Natural killer cell (primary cell): ENCODE measurements at regions of chr17 and their contacts with region 1.

Region 1: DNA sequence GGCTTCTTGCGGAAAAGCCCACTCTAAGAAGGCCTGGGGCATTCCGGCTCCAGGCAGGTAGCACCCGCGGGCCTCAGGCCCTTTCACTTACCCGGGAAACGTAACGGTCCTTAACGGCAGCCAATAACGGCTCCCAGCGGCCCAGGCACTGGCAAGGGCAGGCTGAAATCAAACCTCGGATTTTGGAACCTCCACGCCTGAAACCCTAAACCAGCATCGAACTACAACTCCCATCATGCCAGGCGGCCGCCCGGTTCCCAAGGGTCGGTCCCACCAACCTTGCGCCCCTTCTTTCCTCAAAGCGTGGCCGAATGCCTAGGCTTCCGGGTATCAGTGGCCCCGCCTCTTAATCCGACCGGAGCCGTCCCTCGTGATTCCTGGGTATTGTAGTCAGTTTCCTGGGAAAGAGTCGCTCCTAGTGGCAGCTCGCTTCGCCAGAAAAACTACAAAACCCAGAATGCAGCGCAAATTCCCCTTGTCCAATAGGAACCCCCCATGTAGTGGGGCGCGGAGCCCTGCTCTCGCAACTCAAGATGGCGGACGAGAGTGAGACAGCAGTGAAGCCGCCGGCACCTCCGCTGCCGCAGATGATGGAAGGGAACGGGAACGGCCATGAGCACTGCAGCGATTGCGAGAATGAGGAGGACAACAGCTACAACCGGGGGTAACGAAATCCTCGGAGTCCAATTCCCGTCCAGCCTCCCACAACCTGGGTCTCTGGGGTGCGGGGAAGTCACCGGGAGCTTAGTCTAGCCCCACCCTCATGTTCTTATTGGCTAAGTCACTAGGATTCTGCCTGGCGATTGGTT is at the start of gene NMT1:
- DNase-seq: peak; percentile 90 to 98
- ATAC-seq: peak; percentile 89 to 97 (median 89)
- H3K4me3 ChIP-seq: peak within 1 kb of the TSS; percentile 87
- H3K4me3 Mint-ChIP-seq: peak within 1 kb of the TSS; percentile 91
- H3K27ac ChIP-seq: peak within 1 kb of the TSS; percentile 84
- H3K27ac Mint-ChIP-seq: peak within 1 kb of the TSS; percentile 90 to 100
- H3K4me1 ChIP-seq: peaks cover 20% of the 10 kb centered on the region
- H3K4me1 Mint-ChIP-seq: peaks cover 26 to 31% of the 10 kb centered on the region in 2 donors
- H3K27me3 ChIP-seq: no peaks in the 10 kb centered on the region
- H3K27me3 Mint-ChIP-seq: no peaks in the 10 kb centered on the region
- CTCF ChIP-seq: no peak
- total RNA-seq, gene NMT1: 56.6 to 94.7 (median 77.6) TPM

Region 2: GRCh38 chr17:44887971-44888954 is 172.7 kb before region 1 on chr17:
- intact Hi-C with region 1: no loop called
- DNase-seq: peak in 1 of 2 donors; percentile 47
- ATAC-seq: peak in 2 of 3 donors; percentile 73 to 84
- H3K4me3 ChIP-seq: no peak overlapping the region
- H3K4me3 Mint-ChIP-seq: no peak overlapping the region
- H3K27ac ChIP-seq: peak overlapping the region; percentile 21
- H3K27ac Mint-ChIP-seq: no peak overlapping the region
- H3K4me1 ChIP-seq: peaks cover 23% of the 10 kb centered on the region
- H3K4me1 Mint-ChIP-seq: peaks cover 0 to 5% of the 10 kb centered on the region in 2 donors
- H3K27me3 ChIP-seq: no peaks in the 10 kb centered on the region
- H3K27me3 Mint-ChIP-seq: no peaks in the 10 kb centered on the region
- CTCF ChIP-seq: no peak

Region 3: DNA sequence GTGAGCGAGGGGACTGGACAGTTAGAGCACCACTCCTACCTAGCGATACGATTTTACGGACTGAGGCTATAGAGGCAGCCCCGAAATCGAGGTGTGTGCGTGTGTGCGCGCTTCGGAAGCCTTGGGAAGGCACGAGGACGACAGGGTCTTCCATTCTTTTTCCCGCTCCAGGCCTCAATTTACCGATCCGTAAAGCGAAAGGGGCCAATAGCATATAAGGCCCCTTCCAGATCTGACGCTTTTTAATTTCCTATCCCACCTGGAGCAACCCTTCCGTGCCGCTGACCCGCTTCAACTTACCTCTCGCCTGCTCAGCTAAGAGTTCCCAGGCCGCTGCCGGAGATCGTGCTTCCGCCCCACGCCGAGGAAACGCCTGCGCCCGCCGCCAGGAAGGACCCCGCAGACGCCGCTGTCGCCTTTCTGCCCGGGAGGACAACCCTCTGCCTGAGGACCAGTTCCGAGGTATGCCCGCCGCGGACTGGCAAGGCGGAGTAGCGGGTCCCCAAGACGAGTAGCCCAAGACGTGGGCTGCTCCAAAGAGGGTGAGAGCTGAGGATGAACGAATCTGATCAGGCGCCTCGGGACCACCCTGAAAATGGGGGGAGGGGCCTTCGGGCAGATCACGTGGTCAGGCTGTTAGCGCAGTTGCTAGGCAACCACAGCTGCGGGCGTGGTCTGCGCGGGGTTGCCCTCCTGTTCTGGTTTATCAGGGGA is 161.8 kb before region 1 on chr17 and contains the start of gene EFTUD2:
- intact Hi-C with region 1: loop called (anchors 1 kb)
- DNase-seq: peak; percentile 94 to 97
- ATAC-seq: peak; percentile 93 to 95 (median 94)
- H3K4me3 ChIP-seq: peak within 1 kb of the TSS; percentile 97
- H3K4me3 Mint-ChIP-seq: peak within 1 kb of the TSS; percentile 92
- H3K27ac ChIP-seq: peak within 1 kb of the TSS; percentile 99
- H3K27ac Mint-ChIP-seq: peak within 1 kb of the TSS; percentile 99
- H3K4me1 ChIP-seq: peaks cover 20% of the 10 kb centered on the region
- H3K4me1 Mint-ChIP-seq: peaks cover 16 to 32% of the 10 kb centered on the region in 2 donors
- H3K27me3 ChIP-seq: no peaks in the 10 kb centered on the region
- H3K27me3 Mint-ChIP-seq: peaks cover 3 to 11% of the 10 kb centered on the region in 2 donors
- CTCF ChIP-seq: no peak
- total RNA-seq, gene EFTUD2: 135 to 178 (median 164) TPM

Region 4: GRCh38 chr17:45161019-45161825 is 100.2 kb after region 1 on chr17:
- intact Hi-C with region 1: loop called (anchors 1 kb)
- DNase-seq: peak; percentile 97 to 99
- ATAC-seq: peak; percentile 91 to 97 (median 93)
- H3K4me3 ChIP-seq: peak overlapping the region; percentile 99
- H3K4me3 Mint-ChIP-seq: peak overlapping the region; percentile 95
- H3K27ac ChIP-seq: peak overlapping the region; percentile 100
- H3K27ac Mint-ChIP-seq: peak overlapping the region; percentile 93 to 94
- H3K4me1 ChIP-seq: peaks cover 22% of the 10 kb centered on the region
- H3K4me1 Mint-ChIP-seq: peaks cover 33 to 46% of the 10 kb centered on the region in 2 donors
- H3K27me3 ChIP-seq: no peaks in the 10 kb centered on the region
- H3K27me3 Mint-ChIP-seq: no peaks in the 10 kb centered on the region
- CTCF ChIP-seq: no peak